Activated CD4-positive, alpha-beta memory T cell treated with anti-CD3 and anti-CD28 coated beads for 36 hours (primary cell): ENCODE measurements at regions of chr14 and their contacts with region 1.

Region 1: DNA sequence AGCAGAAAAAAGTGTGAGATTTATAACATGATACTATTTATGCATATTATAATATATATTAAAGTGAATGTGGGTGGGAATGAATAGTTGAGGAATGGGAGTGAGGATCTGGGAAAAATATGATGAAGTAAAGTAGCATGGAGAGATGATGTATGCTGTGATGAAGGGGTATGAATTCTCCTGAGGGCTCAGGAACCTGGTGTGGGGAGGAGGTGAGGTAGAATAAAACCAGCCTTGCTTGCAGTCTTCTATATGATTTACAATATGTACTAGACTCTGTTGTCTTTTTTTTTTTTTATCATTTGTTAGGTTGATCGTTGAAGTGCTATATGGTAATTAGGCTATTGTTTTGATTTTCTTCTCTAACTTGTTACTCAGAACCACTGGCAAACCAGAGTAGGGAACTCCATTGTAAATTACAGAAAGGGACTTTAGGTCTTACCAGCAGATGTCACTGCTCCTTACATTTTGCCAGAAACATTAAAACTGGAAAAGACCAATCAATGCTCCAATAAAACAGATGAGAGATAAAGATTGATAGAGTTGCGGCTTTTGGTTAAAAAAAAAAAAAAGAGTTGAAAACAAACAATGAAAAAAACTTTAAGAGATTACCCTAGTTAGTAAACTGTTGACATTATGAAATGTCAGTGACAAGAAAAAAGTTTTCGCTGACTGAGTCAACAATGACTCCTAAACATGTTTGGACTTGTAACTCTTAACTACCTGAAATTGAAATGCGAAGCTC is 39.9 kb downstream of the ATL1 start:
- DNase-seq: no peak
- H3K4me3 Mint-ChIP-seq: no peak overlapping the region
- H3K27ac Mint-ChIP-seq: no peak overlapping the region
- H3K4me1 Mint-ChIP-seq: peaks cover 4% of the 10 kb centered on the region
- H3K27me3 Mint-ChIP-seq: no peaks in the 10 kb centered on the region

Region 2: GRCh38 chr14:50532502-50533240 is 67.2 kb before region 1 on chr14 and contains the start of gene MAP4K5:
- CTCF ChIA-PET with region 1: no interaction called
- POLR2A ChIA-PET with region 1: no interaction called
- intact Hi-C with region 1: no loop called
- DNase-seq: peak; percentile 91
- H3K4me3 Mint-ChIP-seq: peak within 1 kb of the TSS; percentile 85
- H3K27ac Mint-ChIP-seq: peak within 1 kb of the TSS; percentile 58
- H3K4me1 Mint-ChIP-seq: peaks cover 42% of the 10 kb centered on the region
- H3K27me3 Mint-ChIP-seq: no peaks in the 10 kb centered on the region
- total RNA-seq, gene MAP4K5: 14.6 to 15.6 TPM

Region 3: GRCh38 chr14:50542941-50543418 is 56.9 kb before region 1 on chr14:
- CTCF ChIA-PET with region 1: interaction called, 12 read pairs
- POLR2A ChIA-PET with region 1: no interaction called
- intact Hi-C with region 1: no loop called
- DNase-seq: peak; percentile 20
- H3K4me3 Mint-ChIP-seq: no peak overlapping the region
- H3K27ac Mint-ChIP-seq: no peak overlapping the region
- H3K4me1 Mint-ChIP-seq: peaks cover 9% of the 10 kb centered on the region
- H3K27me3 Mint-ChIP-seq: no peaks in the 10 kb centered on the region

Region 4: DNA sequence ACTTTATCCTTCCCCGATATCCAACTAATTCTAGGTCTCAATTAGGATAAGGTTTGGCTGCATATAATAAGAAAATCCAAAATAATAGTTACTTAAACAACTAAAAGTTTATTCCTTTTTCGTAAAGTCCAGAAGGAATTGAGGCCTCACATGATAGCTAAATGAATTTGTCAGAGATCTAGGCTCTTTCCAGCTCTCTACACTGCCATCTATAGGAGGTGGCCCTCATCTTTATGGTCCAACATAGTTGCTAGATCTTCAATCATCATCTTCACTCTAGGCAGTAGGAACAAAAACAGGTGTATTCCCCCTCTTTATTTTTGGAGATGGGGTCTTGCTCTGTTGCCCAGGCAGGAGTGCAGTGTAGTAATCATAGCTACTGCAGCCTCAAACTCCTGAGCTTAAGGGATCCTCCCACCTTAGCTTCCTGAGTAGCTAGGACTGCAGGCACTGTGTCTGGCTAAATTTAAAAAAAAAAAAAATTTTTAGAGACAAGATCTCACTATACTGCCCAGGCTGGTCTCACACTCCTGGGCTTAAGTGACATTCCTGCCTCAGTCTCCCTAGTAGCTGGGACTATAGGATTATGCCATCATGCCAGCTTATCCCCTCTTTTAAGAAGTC is 114.7 kb after region 1 on chr14:
- CTCF ChIA-PET with region 1: interaction called, 24 read pairs
- POLR2A ChIA-PET with region 1: no interaction called
- intact Hi-C with region 1: no loop called
- DNase-seq: no peak
- H3K4me3 Mint-ChIP-seq: no peak overlapping the region
- H3K27ac Mint-ChIP-seq: no peak overlapping the region
- H3K4me1 Mint-ChIP-seq: no peaks in the 10 kb centered on the region
- H3K27me3 Mint-ChIP-seq: no peaks in the 10 kb centered on the region